GM12878 (cell line): ENCODE measurements at regions of chr7 and their contacts with region 1.

Region 1: GRCh38 chr7:36315309-36316133 is 74.1 kb upstream of the ANLN start:
- DNase-seq: no peak
- ATAC-seq: no peak
- H3K4me3 ChIP-seq: no peak overlapping the region
- H3K27ac ChIP-seq: no peak overlapping the region
- H3K4me1 ChIP-seq: no peaks in the 10 kb centered on the region
- H3K27me3 ChIP-seq: no peaks in the 10 kb centered on the region
- CTCF ChIP-seq: no peak
- EP300 ChIP-seq: no peak
- POLR2A ChIP-seq: no peak
- RAD21 ChIP-seq: no peak

Region 2: DNA sequence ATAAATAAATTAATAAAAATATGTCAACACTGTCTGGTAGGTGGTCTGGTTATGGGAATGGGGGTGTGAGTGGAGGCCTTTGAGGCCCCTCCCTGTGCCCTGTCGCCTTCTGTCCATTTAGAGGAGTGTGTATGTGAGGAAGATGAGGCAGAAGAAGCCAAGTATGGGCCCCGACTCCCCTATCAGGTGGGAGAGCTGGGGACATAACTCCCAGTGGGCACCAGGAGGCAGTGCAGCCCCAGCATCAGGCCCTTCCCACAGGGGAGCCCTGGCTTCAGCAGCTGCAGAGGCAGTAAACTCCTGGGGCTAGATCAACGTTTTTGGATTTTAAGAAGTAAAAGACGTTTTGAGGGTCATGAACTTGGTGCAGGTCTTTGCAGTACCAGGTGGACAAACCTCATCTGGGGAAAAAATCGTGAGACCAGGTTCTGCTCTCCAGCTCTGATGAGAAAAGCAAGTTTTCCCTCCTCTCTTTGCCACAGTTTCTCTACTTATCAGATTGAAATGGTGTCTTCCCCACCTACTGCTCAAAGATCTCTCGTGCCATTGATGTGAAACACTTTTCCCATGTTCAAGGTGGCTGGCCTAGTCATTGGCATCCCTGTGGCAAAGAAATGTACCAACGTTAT is 330.3 kb before region 1 on chr7:
- CTCF ChIA-PET with region 1: interaction called, 52 read pairs
- POLR2A ChIA-PET with region 1: no interaction called
- RAD21 ChIA-PET with region 1: interaction called, 33 read pairs
- SMC1A ChIA-PET with region 1: interaction called, 39 read pairs
- in situ Hi-C with region 1: no loop called
- intact Hi-C with region 1: loop called (anchors 1 kb)
- DNase-seq: no peak
- ATAC-seq: peak; percentile 99
- H3K4me3 ChIP-seq: no peak overlapping the region
- H3K27ac ChIP-seq: no peak overlapping the region
- H3K4me1 ChIP-seq: no peaks in the 10 kb centered on the region
- H3K27me3 ChIP-seq: peaks cover 0 to 3% of the 10 kb centered on the region in 2 experiments; a peak in 1 of 4 replicates
- CTCF ChIP-seq: peak; percentile 91 to 96 (median 92)
- EP300 ChIP-seq: no peak
- POLR2A ChIP-seq: no peak
- RAD21 ChIP-seq: peak; percentile 99

Region 3: GRCh38 chr7:36021367-36021766 is 294.2 kb before region 1 on chr7:
- CTCF ChIA-PET with region 1: interaction called, 21 read pairs
- POLR2A ChIA-PET with region 1: no interaction called
- RAD21 ChIA-PET with region 1: no interaction called
- SMC1A ChIA-PET with region 1: no interaction called
- in situ Hi-C with region 1: no loop called
- intact Hi-C with region 1: no loop called
- DNase-seq: no peak
- ATAC-seq: 0 out of 3 replicates have a peak, but pooled peaks have one; percentile 37
- H3K4me3 ChIP-seq: no peak overlapping the region
- H3K27ac ChIP-seq: no peak overlapping the region
- H3K4me1 ChIP-seq: no peaks in the 10 kb centered on the region
- H3K27me3 ChIP-seq: no peaks in the 10 kb centered on the region
- CTCF ChIP-seq: peak; percentile 39 to 54 (median 42); a peak in 5 of 6 replicates
- EP300 ChIP-seq: no peak
- POLR2A ChIP-seq: no peak
- RAD21 ChIP-seq: peak; percentile 57

Region 4: GRCh38 chr7:36128448-36129047 is 187.0 kb before region 1 on chr7:
- CTCF ChIA-PET with region 1: interaction called, 28 read pairs
- POLR2A ChIA-PET with region 1: no interaction called
- RAD21 ChIA-PET with region 1: interaction called, 11 read pairs
- SMC1A ChIA-PET with region 1: interaction called, 11 read pairs
- in situ Hi-C with region 1: no loop called
- intact Hi-C with region 1: no loop called
- DNase-seq: no peak
- ATAC-seq: peak; percentile 55; the same call in 2 of the 3 replicates
- H3K4me3 ChIP-seq: no peak overlapping the region
- H3K27ac ChIP-seq: no peak overlapping the region
- H3K4me1 ChIP-seq: no peaks in the 10 kb centered on the region
- H3K27me3 ChIP-seq: no peaks in the 10 kb centered on the region
- CTCF ChIP-seq: peak in 2 of 3 experiments; percentile 29 to 35; a peak in 4 of 6 replicates
- EP300 ChIP-seq: no peak
- POLR2A ChIP-seq: no peak
- RAD21 ChIP-seq: no peak

Region 5: DNA sequence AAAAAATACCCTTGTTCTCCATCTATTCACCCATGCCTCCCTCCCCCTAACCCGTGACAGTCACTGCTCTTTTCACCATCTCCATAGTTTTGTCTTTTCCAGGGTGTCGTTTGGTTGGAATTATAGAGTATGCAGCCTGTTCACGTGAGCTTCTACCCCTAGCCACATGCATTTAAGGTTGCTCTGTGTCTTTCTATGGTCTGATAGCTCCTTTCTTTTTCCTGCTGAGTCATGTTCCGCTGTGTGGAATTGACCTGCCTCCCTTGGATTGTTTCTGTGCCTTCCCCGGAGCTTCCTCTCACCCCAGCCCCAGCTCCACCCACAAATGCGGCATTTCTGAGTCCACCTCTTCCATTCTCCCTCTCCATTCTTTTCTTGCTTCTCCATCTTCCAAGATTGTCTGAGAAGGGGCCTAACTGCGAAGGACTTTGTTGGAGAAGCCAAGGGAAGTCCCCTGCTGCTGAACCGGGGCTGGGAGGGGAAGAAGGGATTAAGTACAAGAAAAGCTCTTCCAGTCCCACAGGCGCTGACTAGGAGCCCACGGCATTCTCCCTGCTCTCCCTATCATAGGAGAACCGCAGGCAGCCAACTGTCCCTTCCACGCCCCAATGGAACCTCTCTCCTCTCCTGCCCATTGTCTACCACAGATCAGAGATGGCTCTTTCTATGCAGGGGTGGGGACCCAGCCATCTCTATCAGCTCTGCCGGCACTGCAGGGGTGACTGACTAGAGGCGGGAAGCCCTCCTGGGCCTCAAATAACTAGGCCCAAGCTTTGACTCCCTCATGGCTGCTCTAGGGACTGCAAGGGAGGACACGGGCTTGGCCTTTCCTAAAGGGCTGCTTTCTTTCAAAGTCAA is 13.4 kb before region 1 on chr7:
- CTCF ChIA-PET with region 1: interaction called, 14 read pairs
- POLR2A ChIA-PET with region 1: no interaction called
- RAD21 ChIA-PET with region 1: interaction called, 8 read pairs
- SMC1A ChIA-PET with region 1: interaction called, 4 read pairs
- in situ Hi-C with region 1: no loop called
- intact Hi-C with region 1: no loop called
- DNase-seq: no peak
- ATAC-seq: no peak
- H3K4me3 ChIP-seq: no peak overlapping the region
- H3K27ac ChIP-seq: no peak overlapping the region
- H3K4me1 ChIP-seq: no peaks in the 10 kb centered on the region
- H3K27me3 ChIP-seq: no peaks in the 10 kb centered on the region; a peak in 1 of 4 replicates
- CTCF ChIP-seq: no peak
- EP300 ChIP-seq: no peak
- POLR2A ChIP-seq: no peak
- RAD21 ChIP-seq: no peak